GM12878 (cell line): ENCODE measurements at regions of chr1 and their contacts with region 1.

Region 1: GRCh38 chr1:109687616-109688499 is at the start of gene GSTM1:
- DNase-seq: peak; percentile 25
- ATAC-seq: peak; percentile 99
- H3K4me3 ChIP-seq: peak within 1 kb of the TSS; percentile 71
- H3K27ac ChIP-seq: peak within 1 kb of the TSS; percentile 72
- H3K4me1 ChIP-seq: no peaks in the 10 kb centered on the region
- H3K27me3 ChIP-seq: no peaks in the 10 kb centered on the region
- CTCF ChIP-seq: peak; percentile 29 to 49 (median 38); a peak in 4 of 6 replicates
- EP300 ChIP-seq: no peak
- POLR2A ChIP-seq: peak; percentile 83
- RAD21 ChIP-seq: peak; percentile 52
- polyA plus RNA-seq, gene GSTM1: 66.7 to 75.6 TPM

Region 2: DNA sequence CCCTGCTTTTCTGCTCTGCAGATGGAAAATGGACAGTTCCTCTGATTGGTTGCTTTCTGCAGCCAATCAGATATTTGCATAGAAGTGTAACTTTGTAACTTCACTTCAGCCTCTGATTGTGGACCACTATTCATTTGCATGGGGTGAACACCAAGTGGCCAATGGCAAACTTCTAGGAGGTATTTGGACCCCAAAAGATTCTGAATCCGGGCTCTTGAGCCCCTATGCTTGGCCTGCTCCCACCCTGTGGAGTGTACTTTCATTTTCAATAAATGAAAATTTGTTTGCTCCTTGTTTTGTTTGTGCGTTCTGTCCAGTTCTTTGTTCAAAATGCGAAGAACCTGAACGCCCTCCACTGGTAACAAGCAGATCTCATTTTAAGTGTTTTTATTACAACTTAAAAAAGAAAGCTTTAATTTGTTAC is 38.4 kb before region 1 on chr1:
- CTCF ChIA-PET with region 1: interaction called, 10 read pairs
- POLR2A ChIA-PET with region 1: interaction called, 11 read pairs
- RAD21 ChIA-PET with region 1: interaction called, 4 read pairs
- SMC1A ChIA-PET with region 1: interaction called, 4 read pairs
- in situ Hi-C with region 1: no loop called
- intact Hi-C with region 1: loop called (anchors 5 kb)
- DNase-seq: no peak
- ATAC-seq: no peak
- H3K4me3 ChIP-seq: no peak overlapping the region
- H3K27ac ChIP-seq: no peak overlapping the region
- H3K4me1 ChIP-seq: no peaks in the 10 kb centered on the region
- H3K27me3 ChIP-seq: no peaks in the 10 kb centered on the region
- CTCF ChIP-seq: peak in 1 of 3 experiments; percentile 24; a peak in 1 of 6 replicates
- EP300 ChIP-seq: no peak
- POLR2A ChIP-seq: no peak
- RAD21 ChIP-seq: peak; percentile 29; the same call in 1 of the 2 replicates